ENCODE measurements at regions of chr13 and their contacts with region 1.

Region 1: GRCh38 chr13:62185631-62186256 is 770.1 kb upstream of the PCDH20 start:
- DNase-seq: no peak

Region 2: GRCh38 chr13:62173958-62174357 is 11.8 kb before region 1 on chr13:
- intact Hi-C with region 1: loop called in 1 of 2 experiments (anchors 1 kb)
- DNase-seq: no peak

Region 3: DNA sequence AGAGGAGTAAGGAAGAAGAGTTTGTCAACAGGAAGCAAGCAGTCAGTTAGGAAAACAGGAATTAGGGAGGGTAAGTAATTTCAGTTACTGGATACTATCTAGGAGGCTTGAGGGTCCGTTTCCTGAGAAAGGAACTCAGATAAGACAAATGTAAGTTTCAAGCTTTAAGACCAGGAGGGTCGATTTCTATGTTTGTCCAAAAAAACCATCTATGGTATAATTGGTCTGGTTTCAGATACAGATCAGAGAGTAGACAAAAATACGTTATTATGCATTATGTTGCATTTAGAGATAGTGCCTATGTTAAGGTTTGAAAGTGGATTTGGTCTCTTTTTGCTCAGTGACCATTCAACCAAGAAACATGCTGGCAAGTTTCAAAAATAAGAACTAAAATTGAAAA is 19.5 kb after region 1 on chr13:
- intact Hi-C with region 1: loop called in 1 of 2 experiments (anchors 1 kb)
- DNase-seq: no peak